ENCODE measurements at regions of chr19 and their contacts with region 1.

Region 1: GRCh38 chr19:35959040-35959967 is 23.1 kb downstream of the LRFN3 start:
- DNase-seq: peak; percentile 85 to 87 (median 87)
- H3K4me3 ChIP-seq: peak overlapping the region; percentile 52 to 72
- H3K4me3 Mint-ChIP-seq: peak overlapping the region; percentile 66 to 87 (median 80)
- H3K27ac ChIP-seq: peak overlapping the region; percentile 36
- H3K27ac Mint-ChIP-seq: peak overlapping the region in 5 of 7 donors; percentile 29 to 77 (median 60)
- H3K4me1 ChIP-seq: peaks cover 48% of the 10 kb centered on the region
- H3K4me1 Mint-ChIP-seq: peaks cover 21 to 56% (median 32%) of the 10 kb centered on the region in 4 donors
- H3K27me3 ChIP-seq: no peaks in the 10 kb centered on the region
- H3K27me3 Mint-ChIP-seq: peaks cover 0 to 3% of the 10 kb centered on the region in 2 donors

Region 2: DNA sequence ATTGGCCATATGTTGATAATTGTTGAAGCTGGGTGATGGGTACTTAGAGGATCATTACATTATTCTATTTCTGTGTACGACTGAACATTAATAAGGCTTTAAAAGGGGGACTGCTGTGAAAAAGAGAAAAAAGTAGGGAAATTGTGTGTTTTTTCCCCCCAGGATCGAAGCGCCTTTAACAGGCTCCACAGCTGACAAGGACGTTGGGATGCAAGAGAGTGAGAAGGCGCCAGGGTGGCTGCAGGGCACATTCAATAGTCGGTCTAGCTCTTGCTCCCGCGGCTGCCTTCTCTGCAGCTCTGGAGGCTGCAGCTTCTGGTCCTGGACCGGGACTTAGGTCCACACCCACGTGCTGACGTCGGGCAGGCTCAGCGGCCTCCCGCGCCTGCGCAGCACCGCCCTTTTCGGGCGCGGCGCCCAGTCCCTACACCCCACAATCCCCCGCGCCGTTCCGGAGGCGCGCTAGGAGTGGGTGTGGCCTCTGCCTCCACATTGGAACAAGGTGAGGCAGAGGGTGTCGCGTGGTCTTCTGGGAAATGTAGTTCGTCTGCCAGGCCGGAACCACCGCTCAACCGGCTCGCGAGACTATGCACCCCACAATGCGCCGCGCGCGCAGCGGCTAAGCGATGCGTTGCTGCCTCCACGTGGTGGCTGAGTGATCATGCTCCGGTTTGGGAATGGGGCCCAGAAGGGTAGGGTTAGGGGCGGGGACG is 28.0 kb before region 1 on chr19:
- CTCF ChIA-PET with region 1: interaction called, 5 read pairs
- POLR2A ChIA-PET with region 1: interaction called, 8 read pairs
- intact Hi-C with region 1: loop called (anchors 1 kb)
- DNase-seq: peak; percentile 99 to 100 (median 100)
- H3K4me3 ChIP-seq: peak overlapping the region in 1 of 2 donors; percentile 49
- H3K4me3 Mint-ChIP-seq: peak overlapping the region; percentile 76 to 85 (median 80)
- H3K27ac ChIP-seq: peak overlapping the region; percentile 54
- H3K27ac Mint-ChIP-seq: peak overlapping the region; percentile 86 to 97 (median 95)
- H3K4me1 ChIP-seq: peaks cover 47% of the 10 kb centered on the region
- H3K4me1 Mint-ChIP-seq: peaks cover 27 to 62% (median 38%) of the 10 kb centered on the region in 4 donors
- H3K27me3 ChIP-seq: no peaks in the 10 kb centered on the region
- H3K27me3 Mint-ChIP-seq: no peaks in the 10 kb centered on the region

Region 3: DNA sequence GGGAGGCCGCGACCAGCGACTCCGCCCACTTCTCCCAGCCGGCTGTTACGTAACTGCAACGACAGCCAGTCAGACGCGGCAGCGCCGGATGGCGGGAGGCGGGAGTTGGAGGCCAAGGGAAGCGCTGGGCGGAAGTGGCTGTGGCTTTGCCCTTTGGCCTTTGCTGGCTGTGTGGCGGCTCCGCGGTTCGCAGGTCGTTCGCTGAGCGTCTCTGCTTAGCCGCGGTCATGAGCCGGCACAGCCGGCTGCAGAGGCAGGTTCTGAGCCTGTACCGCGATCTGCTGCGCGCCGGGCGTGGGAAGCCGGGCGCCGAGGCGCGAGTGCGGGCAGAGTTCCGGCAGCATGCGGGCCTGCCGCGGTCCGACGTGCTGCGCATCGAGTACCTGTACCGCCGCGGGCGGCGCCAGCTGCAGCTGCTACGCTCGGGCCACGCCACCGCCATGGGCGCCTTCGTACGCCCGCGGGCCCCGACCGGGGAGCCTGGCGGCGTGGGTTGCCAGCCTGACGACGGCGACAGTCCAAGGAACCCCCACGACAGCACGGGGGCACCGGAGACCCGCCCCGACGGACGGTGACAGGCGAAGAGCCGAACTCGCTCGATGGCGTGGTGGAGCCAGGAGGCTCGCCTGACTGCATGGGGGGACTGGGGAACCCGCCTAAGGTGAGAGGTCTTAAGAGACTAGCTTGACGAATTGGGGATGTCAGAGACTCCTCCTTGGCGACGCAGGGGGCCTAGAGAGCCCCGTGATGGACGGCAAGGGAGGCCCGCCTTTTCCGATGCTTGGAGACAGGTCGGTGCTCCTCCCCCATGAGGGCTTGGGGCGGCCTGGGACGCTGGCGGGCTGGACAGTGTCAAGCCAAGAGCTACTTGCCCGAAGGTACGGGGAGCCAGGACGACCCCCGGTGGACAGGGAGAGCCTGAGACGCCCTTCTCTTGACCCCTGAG is 36.0 kb after region 1 on chr19 and contains the start of gene SDHAF1:
- CTCF ChIA-PET with region 1: interaction called, 8 read pairs
- POLR2A ChIA-PET with region 1: interaction called, 12 read pairs
- intact Hi-C with region 1: loop called (anchors 1 kb)
- DNase-seq: peak; percentile 87 to 92 (median 87)
- H3K4me3 ChIP-seq: peak within 1 kb of the TSS; percentile 69 to 82
- H3K4me3 Mint-ChIP-seq: peak within 1 kb of the TSS; percentile 91 to 96 (median 94)
- H3K27ac ChIP-seq: peak within 1 kb of the TSS; percentile 71
- H3K27ac Mint-ChIP-seq: peak within 1 kb of the TSS; percentile 92 to 97 (median 97)
- H3K4me1 ChIP-seq: peaks cover 26% of the 10 kb centered on the region
- H3K4me1 Mint-ChIP-seq: peaks cover 20 to 48% (median 37%) of the 10 kb centered on the region in 4 donors
- H3K27me3 ChIP-seq: no peaks in the 10 kb centered on the region
- H3K27me3 Mint-ChIP-seq: no peaks in the 10 kb centered on the region
- total RNA-seq, gene SDHAF1: 25.7 to 25.8 TPM

Region 4: DNA sequence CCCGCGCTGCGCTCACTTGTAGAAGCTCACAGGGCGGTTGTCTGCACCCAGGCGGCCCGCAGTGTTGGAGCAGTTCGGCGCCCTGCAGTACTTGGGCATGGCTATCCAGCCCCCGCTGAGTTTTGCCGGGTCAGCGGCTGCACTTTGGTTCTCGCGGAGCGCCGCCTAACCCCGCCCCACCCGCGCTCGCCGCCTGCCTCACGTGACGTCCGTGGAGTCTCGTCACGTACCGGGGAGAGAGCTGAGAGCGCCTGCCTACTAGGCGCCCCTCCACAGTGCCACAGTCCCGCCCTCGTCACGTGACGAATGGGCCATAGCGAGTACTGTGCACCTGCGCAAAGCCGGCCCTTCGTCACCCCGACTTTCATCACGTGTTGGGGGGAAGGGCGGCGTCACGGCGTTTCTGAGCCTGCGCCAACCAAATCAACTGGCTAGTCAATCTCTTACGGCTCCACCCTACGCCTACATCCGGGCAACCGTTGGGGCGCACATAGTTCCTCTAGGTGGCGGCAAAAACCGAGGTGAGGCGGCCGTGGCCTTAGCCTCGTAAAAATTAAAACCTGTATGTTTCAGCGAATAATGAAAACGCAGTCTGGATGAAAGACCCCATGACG is 94.9 kb after region 1 on chr19 and contains the start of gene THAP8:
- CTCF ChIA-PET with region 1: interaction called, 11 read pairs
- POLR2A ChIA-PET with region 1: interaction called, 11 read pairs
- intact Hi-C with region 1: no loop called
- DNase-seq: peak; percentile 99 to 100 (median 100)
- H3K4me3 ChIP-seq: peak within 1 kb of the TSS; percentile 79 to 93
- H3K4me3 Mint-ChIP-seq: peak within 1 kb of the TSS; percentile 96 to 100 (median 99)
- H3K27ac ChIP-seq: peak within 1 kb of the TSS; percentile 78
- H3K27ac Mint-ChIP-seq: peak within 1 kb of the TSS; percentile 98 to 99 (median 98)
- H3K4me1 ChIP-seq: peaks cover 11% of the 10 kb centered on the region
- H3K4me1 Mint-ChIP-seq: peaks cover 16 to 41% (median 21%) of the 10 kb centered on the region in 4 donors
- H3K27me3 ChIP-seq: no peaks in the 10 kb centered on the region
- H3K27me3 Mint-ChIP-seq: no peaks in the 10 kb centered on the region
- total RNA-seq, gene THAP8: 5.1 to 7.0 TPM